Breast epithelium (tissue), 4 donors: ENCODE measurements at regions of chrX and their contacts with region 1.

Region 1: DNA sequence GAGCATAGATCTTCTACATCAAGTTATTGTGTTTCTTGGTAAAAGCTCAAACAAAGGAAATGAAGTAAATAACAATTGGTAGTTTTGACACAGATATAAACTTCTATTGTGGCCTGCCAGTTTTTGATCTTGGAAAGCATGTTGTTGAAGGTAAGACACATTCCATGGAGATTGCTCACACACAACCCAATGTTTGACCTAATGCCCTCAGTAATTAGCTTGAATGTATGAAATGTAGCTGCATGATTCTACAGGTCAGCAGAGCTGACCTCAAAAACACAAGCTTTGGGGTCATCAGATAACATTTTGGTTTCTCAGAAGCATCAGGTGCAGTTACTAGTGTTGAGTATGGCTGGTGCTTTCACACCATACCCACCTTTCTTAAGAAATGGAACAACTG is 16.5 kb downstream of the GPR173 start:
- DNase-seq: no peak
- H3K4me3 ChIP-seq: no peak overlapping the region
- H3K27ac ChIP-seq: no peak overlapping the region
- H3K4me1 ChIP-seq: no peaks in the 10 kb centered on the region
- H3K27me3 ChIP-seq: peaks cover 0 to 33% of the 10 kb centered on the region in 2 donors
- CTCF ChIP-seq: no peak
- POLR2A ChIP-seq: no peak

Region 2: DNA sequence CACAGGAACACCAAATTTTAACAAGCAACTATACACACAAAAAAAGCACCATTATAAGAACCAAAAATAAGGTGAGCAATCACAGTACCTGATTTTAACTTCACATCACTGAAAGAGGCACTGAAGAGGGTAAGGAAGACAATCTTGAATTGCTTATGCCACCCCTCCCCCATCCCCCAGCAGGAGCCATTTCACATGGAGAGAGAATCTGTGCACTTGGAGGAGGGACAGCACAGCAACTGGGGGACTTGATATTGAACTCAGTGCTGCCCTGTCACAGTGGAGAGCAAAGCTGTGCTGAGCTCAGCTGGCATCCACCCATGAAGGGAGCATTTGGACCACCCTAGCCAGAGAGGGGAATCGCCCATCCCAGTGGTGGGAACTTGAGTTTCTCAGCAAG is 1624.7 kb before region 1 on chrX:
- intact Hi-C with region 1: no loop called
- DNase-seq: no peak
- H3K4me3 ChIP-seq: no peak overlapping the region
- H3K27ac ChIP-seq: no peak overlapping the region
- H3K4me1 ChIP-seq: no peaks in the 10 kb centered on the region
- H3K27me3 ChIP-seq: peaks cover 0 to 49% of the 10 kb centered on the region in 2 donors
- CTCF ChIP-seq: no peak
- POLR2A ChIP-seq: no peak

Region 3: DNA sequence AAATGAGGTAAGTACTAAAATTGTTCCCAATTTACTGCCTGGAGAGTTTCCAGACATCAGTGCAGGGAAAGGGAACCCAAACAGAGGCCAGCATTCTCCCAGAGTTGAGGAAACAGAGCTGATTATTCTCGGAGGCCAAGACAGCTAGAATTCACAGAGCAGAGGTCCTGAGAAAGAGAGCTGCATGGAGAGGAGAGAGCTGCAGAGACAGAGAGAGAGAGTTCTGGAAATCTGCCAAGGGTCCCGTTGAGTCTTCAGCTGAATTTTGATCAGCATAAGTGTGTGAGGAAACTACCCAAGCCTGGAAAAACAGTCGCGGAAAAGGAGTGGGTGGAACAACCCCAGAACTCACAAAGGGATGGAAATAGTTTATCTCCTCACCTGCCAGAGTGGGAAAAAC is 60.3 kb before region 1 on chrX:
- intact Hi-C with region 1: loop called (anchors 2 kb)
- DNase-seq: no peak
- H3K4me3 ChIP-seq: no peak overlapping the region
- H3K27ac ChIP-seq: no peak overlapping the region
- H3K4me1 ChIP-seq: no peaks in the 10 kb centered on the region
- H3K27me3 ChIP-seq: peaks cover 0 to 85% of the 10 kb centered on the region in 2 donors
- CTCF ChIP-seq: no peak
- POLR2A ChIP-seq: no peak